ENCODE measurements at regions of chr15 and their contacts with region 1.

Region 1: GRCh38 chr15:73964736-73965093 is 27.4 kb downstream of the STOML1 start:
- DNase-seq: peak; percentile 78
- H3K4me3 Mint-ChIP-seq: peak overlapping the region; percentile 72
- H3K27ac Mint-ChIP-seq: peak overlapping the region; percentile 80
- H3K4me1 Mint-ChIP-seq: peaks cover 36% of the 10 kb centered on the region
- H3K27me3 Mint-ChIP-seq: no peaks in the 10 kb centered on the region

Region 2: DNA sequence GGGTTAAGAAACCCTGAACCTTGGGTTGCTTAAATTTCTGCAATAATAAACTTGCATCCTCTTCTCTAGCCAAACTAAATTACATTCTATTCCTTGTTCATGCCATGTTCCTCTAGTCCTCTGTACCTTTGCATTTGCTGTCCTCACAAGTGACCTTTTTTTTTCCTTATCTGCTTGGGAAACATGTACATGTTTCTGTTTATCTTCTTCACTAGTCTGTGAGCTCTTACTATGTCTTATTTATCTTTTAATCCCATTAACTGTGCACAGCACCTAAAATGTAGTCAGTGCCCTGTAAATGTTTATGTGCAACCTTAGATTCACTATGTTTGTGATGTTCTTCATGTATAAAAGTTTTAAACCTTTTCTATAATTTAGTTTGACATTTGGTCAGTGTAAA is 459.8 kb before region 1 on chr15:
- intact Hi-C with region 1: no loop called
- DNase-seq: no peak
- H3K4me3 Mint-ChIP-seq: no peak overlapping the region
- H3K27ac Mint-ChIP-seq: no peak overlapping the region
- H3K4me1 Mint-ChIP-seq: no peaks in the 10 kb centered on the region
- H3K27me3 Mint-ChIP-seq: peaks cover 20% of the 10 kb centered on the region

Region 3: GRCh38 chr15:73897441-73898261 is 67.1 kb before region 1 on chr15:
- intact Hi-C with region 1: loop called (anchors 1 kb)
- DNase-seq: peak; percentile 58
- H3K4me3 Mint-ChIP-seq: no peak overlapping the region
- H3K27ac Mint-ChIP-seq: no peak overlapping the region
- H3K4me1 Mint-ChIP-seq: peaks cover 3% of the 10 kb centered on the region
- H3K27me3 Mint-ChIP-seq: peaks cover 4% of the 10 kb centered on the region

Region 4: DNA sequence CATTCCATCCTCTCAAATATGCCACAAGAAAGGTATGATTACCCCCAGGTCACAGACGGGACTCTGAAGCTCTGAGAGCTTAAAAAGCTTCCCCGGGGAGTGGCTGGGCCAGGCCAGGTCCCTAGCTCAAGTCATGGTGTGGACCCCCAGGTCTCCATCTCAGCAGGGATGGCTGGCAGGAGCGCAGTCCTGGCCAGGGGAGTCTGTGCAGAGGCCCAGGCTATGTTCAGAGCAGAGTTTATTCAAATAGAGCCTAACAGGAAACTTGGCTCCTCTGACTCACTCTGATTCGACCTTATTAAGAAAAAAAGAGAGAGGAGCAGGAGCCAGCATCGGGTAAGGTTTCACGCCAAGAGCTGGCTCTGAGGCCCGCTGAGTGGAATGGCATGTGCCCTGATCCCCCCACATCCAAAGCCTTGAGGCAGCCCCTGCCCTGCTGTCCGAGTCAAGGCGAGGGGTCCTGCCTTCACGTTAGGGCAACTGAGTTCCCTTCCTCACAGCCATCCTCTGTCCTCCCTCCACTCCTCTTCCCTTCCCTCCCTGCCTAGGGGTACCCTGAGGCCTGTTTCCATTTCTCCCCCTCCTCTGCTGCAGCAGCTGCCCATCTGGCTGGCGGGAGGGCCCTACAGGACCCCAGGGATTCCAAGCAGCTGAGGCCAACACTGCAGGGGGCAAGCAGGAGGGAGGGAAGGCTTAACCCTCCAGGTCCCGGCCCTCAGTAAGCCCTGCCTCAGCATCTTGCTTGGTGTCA is 40.4 kb before region 1 on chr15:
- intact Hi-C with region 1: loop called (anchors 2 kb)
- DNase-seq: no peak
- H3K4me3 Mint-ChIP-seq: no peak overlapping the region
- H3K27ac Mint-ChIP-seq: peak overlapping the region; percentile 62
- H3K4me1 Mint-ChIP-seq: peaks cover 33% of the 10 kb centered on the region
- H3K27me3 Mint-ChIP-seq: peaks cover 9% of the 10 kb centered on the region

Region 5: GRCh38 chr15:73950831-73951561 is 13.7 kb before region 1 on chr15:
- intact Hi-C with region 1: loop called (anchors 1 kb)
- DNase-seq: peak; percentile 49
- H3K4me3 Mint-ChIP-seq: no peak overlapping the region
- H3K27ac Mint-ChIP-seq: peak overlapping the region; percentile 71
- H3K4me1 Mint-ChIP-seq: peaks cover 3% of the 10 kb centered on the region
- H3K27me3 Mint-ChIP-seq: no peaks in the 10 kb centered on the region

Region 6: DNA sequence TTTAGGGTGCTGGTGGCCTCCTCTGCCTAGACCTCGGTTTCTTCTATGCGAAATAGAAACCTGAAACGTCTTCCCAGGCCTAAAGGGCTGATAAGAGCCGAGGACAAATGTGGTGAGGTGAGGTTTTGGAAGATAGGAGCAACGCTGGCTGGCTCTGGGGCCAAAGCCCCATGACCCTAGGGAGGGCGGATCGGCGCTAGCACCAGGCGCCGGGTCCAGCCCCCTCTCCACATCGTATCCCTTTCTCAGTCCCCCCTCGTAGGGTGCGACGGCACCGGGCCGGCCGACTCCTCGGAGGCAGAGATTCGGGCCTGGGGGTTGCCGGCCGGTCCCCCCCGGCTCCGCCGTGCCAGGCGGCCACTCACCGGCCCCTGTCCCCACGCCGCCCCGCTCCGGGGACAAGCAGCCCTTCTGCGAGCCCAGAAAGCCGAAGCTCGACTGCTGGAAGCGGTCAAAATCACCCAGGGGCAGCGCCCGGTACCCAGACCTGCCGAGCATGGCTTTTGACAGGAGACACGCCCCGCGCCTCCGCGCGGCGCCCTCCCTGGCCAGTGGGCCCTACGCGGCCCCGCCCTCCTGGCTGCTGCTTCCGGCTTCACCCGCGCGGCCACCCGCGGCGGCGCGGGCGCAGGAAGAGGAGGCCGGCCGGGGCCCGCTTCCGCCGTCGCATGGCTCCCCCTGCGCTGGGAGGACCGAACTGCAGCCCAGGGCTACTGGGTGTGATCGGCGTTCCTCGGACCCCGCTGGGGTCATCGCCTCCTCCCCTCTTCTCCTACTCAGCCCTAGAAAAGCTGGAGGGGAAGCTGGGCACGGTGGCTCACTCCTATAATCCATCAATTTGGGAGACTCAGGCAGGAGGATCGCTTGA is 27.2 kb after region 1 on chr15 and contains the start of gene STOML1:
- intact Hi-C with region 1: loop called (anchors 2 kb)
- DNase-seq: peak; percentile 93
- H3K4me3 Mint-ChIP-seq: peak within 1 kb of the TSS; percentile 81
- H3K27ac Mint-ChIP-seq: peak within 1 kb of the TSS; percentile 85
- H3K4me1 Mint-ChIP-seq: peaks cover 35% of the 10 kb centered on the region
- H3K27me3 Mint-ChIP-seq: no peaks in the 10 kb centered on the region
- total RNA-seq, gene STOML1: 8.6 and 9.2 TPM in 2 replicates

Region 7: GRCh38 chr15:74007820-74008371 is 43.2 kb after region 1 on chr15:
- intact Hi-C with region 1: loop called (anchors 5 kb)
- DNase-seq: no peak
- H3K4me3 Mint-ChIP-seq: peak overlapping the region; percentile 15
- H3K27ac Mint-ChIP-seq: peak overlapping the region; percentile 97
- H3K4me1 Mint-ChIP-seq: peaks cover 46% of the 10 kb centered on the region
- H3K27me3 Mint-ChIP-seq: no peaks in the 10 kb centered on the region

Measured in activated T-helper 2 cell treated with anti-CD3 and anti-CD28 coated beads, Interferon-gamma antibody, Interleukin-2, Interleukin-4, amounts not matched to agents 10 μg/mL and 5 μg/mL and 100 μg/mL, durations not matched to agents 14 hours and 24 hours and 36 hours (primary cell).